K562 (cell line): ENCODE measurements at regions of chr3 and their contacts with region 1.

Region 1: GRCh38 chr3:38346587-38347410 is at the start of gene XYLB:
- DNase-seq: peak; percentile 96 to 97 (median 96)
- ATAC-seq: peak; percentile 96
- H3K4me3 ChIP-seq: peak within 1 kb of the TSS; percentile 98
- H3K27ac ChIP-seq: peak within 1 kb of the TSS; percentile 89
- H3K4me1 ChIP-seq: peaks cover 18 to 27% of the 10 kb centered on the region in 2 experiments; a peak in 4 of 5 replicates
- H3K27me3 ChIP-seq: no peaks in the 10 kb centered on the region
- CTCF ChIP-seq: peak; percentile 91 to 94 (median 93)
- EP300 ChIP-seq: no peak
- POLR2A ChIP-seq: peak; percentile 83
- RAD21 ChIP-seq: peak; percentile 77 to 82
- polyA plus RNA-seq, gene XYLB: 4.0 to 6.1 TPM

Region 2: DNA sequence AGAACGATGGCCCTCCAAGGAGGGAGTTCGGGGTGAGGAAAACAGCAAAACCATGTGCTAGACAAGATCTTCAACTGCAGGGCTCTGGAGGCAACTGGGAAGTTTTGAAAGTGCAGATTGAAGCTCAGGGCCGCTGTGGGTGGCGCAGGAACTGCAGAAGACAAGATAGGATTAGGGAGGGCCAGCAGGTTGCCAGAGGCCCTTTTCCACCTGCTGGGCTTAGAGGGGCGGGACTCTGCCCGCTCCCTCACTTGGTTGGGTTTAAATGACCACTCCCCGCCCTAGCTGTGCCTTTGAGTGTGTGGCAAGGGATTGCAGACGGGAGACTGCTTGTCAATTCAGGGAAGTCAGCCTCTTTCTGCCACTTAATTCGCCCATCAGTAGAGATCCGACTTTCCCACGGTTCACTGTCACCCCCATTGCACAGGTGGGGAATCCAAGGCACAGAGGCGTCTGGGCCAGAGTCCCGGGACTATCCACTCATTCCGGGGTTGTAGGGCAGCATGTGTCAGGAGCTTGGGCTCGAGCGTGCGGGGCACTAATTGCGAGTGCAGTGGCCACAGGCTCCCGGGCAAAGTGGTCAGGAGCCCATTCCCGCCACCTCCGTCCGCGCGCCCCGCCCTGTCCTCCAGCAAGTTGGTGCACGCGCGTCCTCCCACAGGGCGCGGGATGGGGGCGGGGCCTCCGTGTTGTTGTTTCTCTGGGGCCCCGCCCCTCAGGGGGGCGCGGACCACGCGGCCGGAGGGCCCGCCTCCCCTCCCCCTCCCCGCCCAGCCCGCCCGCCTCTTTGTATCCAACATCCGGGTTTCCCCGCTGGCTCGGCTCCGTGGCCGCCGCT is 106.5 kb after region 1 on chr3 and contains the start of gene ACVR2B:
- CTCF ChIA-PET with region 1: no interaction called
- POLR2A ChIA-PET with region 1: no interaction called
- in situ Hi-C with region 1: no loop called
- intact Hi-C with region 1: loop called (anchors 5 kb)
- DNase-seq: peak; percentile 93 to 99 (median 98)
- ATAC-seq: peak; percentile 82
- H3K4me3 ChIP-seq: peak within 1 kb of the TSS; percentile 72
- H3K27ac ChIP-seq: peak within 1 kb of the TSS; percentile 92
- H3K4me1 ChIP-seq: peaks cover 27 to 30% of the 10 kb centered on the region in 2 experiments
- H3K27me3 ChIP-seq: no peaks in the 10 kb centered on the region
- CTCF ChIP-seq: no peak
- EP300 ChIP-seq: no peak
- POLR2A ChIP-seq: 0 out of 2 replicates have a peak, but pooled peaks have one; percentile 37
- RAD21 ChIP-seq: no peak
- polyA plus RNA-seq, gene ACVR2B: 1.8 to 2.6 TPM

Region 3: GRCh38 chr3:38479431-38480092 is 132.8 kb after region 1 on chr3:
- CTCF ChIA-PET with region 1: interaction called, 3 read pairs
- POLR2A ChIA-PET with region 1: no interaction called
- in situ Hi-C with region 1: no loop called
- intact Hi-C with region 1: loop called (anchors 2 kb)
- DNase-seq: peak; percentile 64 to 73 (median 70)
- ATAC-seq: peak; percentile 88
- H3K4me3 ChIP-seq: no peak overlapping the region
- H3K27ac ChIP-seq: no peak overlapping the region
- H3K4me1 ChIP-seq: peaks cover 0 to 3% of the 10 kb centered on the region in 2 experiments; a peak in 1 of 5 replicates
- H3K27me3 ChIP-seq: no peaks in the 10 kb centered on the region
- CTCF ChIP-seq: peak; percentile 80 to 91 (median 86)
- EP300 ChIP-seq: no peak
- POLR2A ChIP-seq: no peak
- RAD21 ChIP-seq: peak; percentile 85 to 87

Region 4: GRCh38 chr3:38496131-38496910 is 149.5 kb after region 1 on chr3 and contains the start of gene EXOG:
- CTCF ChIA-PET with region 1: no interaction called
- POLR2A ChIA-PET with region 1: no interaction called
- in situ Hi-C with region 1: no loop called
- intact Hi-C with region 1: no loop called
- DNase-seq: peak; percentile 97 to 100 (median 100)
- ATAC-seq: peak; percentile 99
- H3K4me3 ChIP-seq: peak within 1 kb of the TSS; percentile 63
- H3K27ac ChIP-seq: peak within 1 kb of the TSS; percentile 69
- H3K4me1 ChIP-seq: peaks cover 4 to 5% of the 10 kb centered on the region in 2 experiments; a peak in 4 of 5 replicates
- H3K27me3 ChIP-seq: no peaks in the 10 kb centered on the region
- CTCF ChIP-seq: peak; percentile 87 to 96 (median 90)
- EP300 ChIP-seq: peak; percentile 12; the same call in 1 of the 2 replicates
- POLR2A ChIP-seq: peak; percentile 86
- RAD21 ChIP-seq: peak; percentile 82 to 83
- polyA plus RNA-seq, gene EXOG: 13.1 to 21.7 TPM

Region 5: DNA sequence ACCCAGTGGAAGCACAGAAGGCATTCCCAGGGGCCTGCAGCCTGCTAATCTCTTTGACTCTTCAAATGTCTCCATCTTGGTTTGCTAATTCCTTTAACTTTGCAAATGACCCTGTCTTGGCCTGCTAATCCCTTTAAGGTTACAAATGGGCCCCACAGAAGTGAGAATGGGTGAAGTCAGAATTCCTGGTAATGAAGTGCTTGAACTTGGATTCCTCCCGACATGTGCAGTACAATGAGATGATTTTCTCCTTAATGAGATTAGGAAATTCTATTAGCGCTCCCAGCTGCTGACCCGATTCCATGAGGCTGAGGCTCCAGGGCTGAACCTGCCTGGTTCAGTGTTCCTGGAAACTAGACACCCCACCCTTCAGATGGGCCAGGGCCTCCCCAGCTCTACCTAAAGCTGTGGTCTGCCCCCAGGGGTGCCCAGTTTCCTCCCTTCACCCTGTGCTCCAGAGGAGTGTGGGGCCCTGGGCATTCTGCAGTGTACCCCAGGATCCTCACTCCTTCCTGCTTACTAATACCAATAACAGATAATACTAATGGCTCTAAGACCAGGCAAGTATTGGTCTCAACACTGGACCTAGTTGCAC is 255.3 kb after region 1 on chr3:
- CTCF ChIA-PET with region 1: no interaction called
- POLR2A ChIA-PET with region 1: no interaction called
- in situ Hi-C with region 1: no loop called
- intact Hi-C with region 1: no loop called
- DNase-seq: no peak
- ATAC-seq: no peak
- H3K4me3 ChIP-seq: no peak overlapping the region
- H3K27ac ChIP-seq: no peak overlapping the region
- H3K4me1 ChIP-seq: no peaks in the 10 kb centered on the region
- H3K27me3 ChIP-seq: peaks cover 2 to 62% of the 10 kb centered on the region in 2 experiments; a peak in 3 of 5 replicates
- CTCF ChIP-seq: no peak
- EP300 ChIP-seq: no peak
- POLR2A ChIP-seq: no peak
- RAD21 ChIP-seq: no peak